Activated CD4-positive, alpha-beta T cell treated with anti-CD3 and anti-CD28 coated beads for 36 hours (primary cell): ENCODE measurements at regions of chr3 and their contacts with region 1.

Region 1: DNA sequence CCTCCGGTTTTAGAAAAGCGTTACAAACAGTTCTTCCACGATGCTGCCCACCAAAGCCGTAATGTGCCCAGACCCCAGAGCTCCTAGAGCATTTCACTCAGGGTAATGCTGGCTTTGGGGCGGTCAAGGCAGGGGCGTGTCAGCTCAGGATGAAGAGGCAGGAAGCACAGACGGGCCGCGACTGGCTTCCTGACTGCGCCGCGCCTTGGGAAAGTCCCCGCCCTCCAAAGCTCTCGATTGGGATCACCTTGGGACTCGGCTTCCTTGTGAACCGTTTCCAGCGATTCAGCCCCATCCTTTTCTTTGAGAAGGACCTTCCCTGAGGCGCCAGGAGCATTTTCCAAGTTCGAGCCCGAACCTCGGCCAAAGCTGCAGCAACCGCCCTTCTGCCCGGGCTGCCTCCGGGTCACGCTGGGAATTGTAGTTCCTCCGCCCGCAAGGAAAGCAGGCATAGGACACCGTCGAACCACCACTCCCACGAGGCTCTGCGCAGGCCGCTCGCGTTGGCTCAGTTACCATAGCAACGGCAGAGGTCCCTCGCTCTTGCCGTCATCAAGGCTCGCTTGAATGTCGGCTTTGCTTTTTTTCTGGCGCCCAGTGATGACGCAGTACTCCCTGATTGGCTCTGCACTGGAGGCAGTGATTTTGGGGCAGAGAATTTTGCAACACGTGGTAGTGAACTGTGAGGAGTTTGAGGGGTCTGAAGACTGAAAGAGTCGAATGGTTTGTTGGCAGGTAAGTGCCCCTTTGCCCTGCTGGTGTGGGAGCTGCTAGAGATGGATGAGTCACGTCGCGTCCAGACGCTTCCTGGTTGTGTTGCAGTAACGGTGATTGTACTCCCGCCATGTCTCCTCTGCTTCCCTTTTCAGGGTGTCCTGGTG is at the starts of genes CCDC191 and QTRT2:
- DNase-seq: peak; percentile 99
- ATAC-seq: peak; percentile 97
- H3K4me3 Mint-ChIP-seq: peak within 1 kb of the TSS; percentile 91
- H3K27ac Mint-ChIP-seq: peak within 1 kb of the TSS; percentile 95
- H3K4me1 Mint-ChIP-seq: peaks cover 43% of the 10 kb centered on the region
- H3K27me3 Mint-ChIP-seq: no peaks in the 10 kb centered on the region
- total RNA-seq, gene CCDC191: 2.2 to 2.4 TPM
- total RNA-seq, gene QTRT2: 31.3 to 47.0 TPM

Region 2: GRCh38 chr3:113514265-113514769 is 542.1 kb before region 1 on chr3:
- CTCF ChIA-PET with region 1: no interaction called
- POLR2A ChIA-PET with region 1: no interaction called
- intact Hi-C with region 1: loop called (anchors 1 to 2 kb)
- DNase-seq: no peak
- ATAC-seq: peak; percentile 30
- H3K4me3 Mint-ChIP-seq: no peak overlapping the region
- H3K27ac Mint-ChIP-seq: no peak overlapping the region
- H3K4me1 Mint-ChIP-seq: peaks cover 10% of the 10 kb centered on the region
- H3K27me3 Mint-ChIP-seq: peaks cover 6% of the 10 kb centered on the region

Region 3: GRCh38 chr3:113736548-113737089 is 319.8 kb before region 1 on chr3:
- CTCF ChIA-PET with region 1: interaction called, 4 read pairs
- POLR2A ChIA-PET with region 1: no interaction called
- intact Hi-C with region 1: loop called in 1 of 2 experiments (anchors 1 kb)
- DNase-seq: peak; percentile 25
- ATAC-seq: peak; percentile 86
- H3K4me3 Mint-ChIP-seq: no peak overlapping the region
- H3K27ac Mint-ChIP-seq: peak overlapping the region; percentile 74
- H3K4me1 Mint-ChIP-seq: peaks cover 67% of the 10 kb centered on the region
- H3K27me3 Mint-ChIP-seq: no peaks in the 10 kb centered on the region

Region 4: GRCh38 chr3:113844622-113845222 is 211.6 kb before region 1 on chr3:
- CTCF ChIA-PET with region 1: interaction called, 3 read pairs
- POLR2A ChIA-PET with region 1: no interaction called
- intact Hi-C with region 1: loop called (anchors 1 to 5 kb)
- DNase-seq: no peak
- ATAC-seq: no peak
- H3K4me3 Mint-ChIP-seq: no peak overlapping the region
- H3K27ac Mint-ChIP-seq: no peak overlapping the region
- H3K4me1 Mint-ChIP-seq: no peaks in the 10 kb centered on the region
- H3K27me3 Mint-ChIP-seq: no peaks in the 10 kb centered on the region

Region 5: GRCh38 chr3:113947372-113948014 is 108.9 kb before region 1 on chr3 and contains the start of gene ZDHHC23:
- CTCF ChIA-PET with region 1: no interaction called
- POLR2A ChIA-PET with region 1: no interaction called
- intact Hi-C with region 1: loop called (anchors 1 to 2 kb)
- DNase-seq: peak; percentile 74
- ATAC-seq: peak; percentile 75
- H3K4me3 Mint-ChIP-seq: peak within 1 kb of the TSS; percentile 76
- H3K27ac Mint-ChIP-seq: peak within 1 kb of the TSS; percentile 79
- H3K4me1 Mint-ChIP-seq: peaks cover 11% of the 10 kb centered on the region
- H3K27me3 Mint-ChIP-seq: peaks cover 25% of the 10 kb centered on the region
- total RNA-seq, gene ZDHHC23: 4.5 to 5.1 TPM

Region 6: DNA sequence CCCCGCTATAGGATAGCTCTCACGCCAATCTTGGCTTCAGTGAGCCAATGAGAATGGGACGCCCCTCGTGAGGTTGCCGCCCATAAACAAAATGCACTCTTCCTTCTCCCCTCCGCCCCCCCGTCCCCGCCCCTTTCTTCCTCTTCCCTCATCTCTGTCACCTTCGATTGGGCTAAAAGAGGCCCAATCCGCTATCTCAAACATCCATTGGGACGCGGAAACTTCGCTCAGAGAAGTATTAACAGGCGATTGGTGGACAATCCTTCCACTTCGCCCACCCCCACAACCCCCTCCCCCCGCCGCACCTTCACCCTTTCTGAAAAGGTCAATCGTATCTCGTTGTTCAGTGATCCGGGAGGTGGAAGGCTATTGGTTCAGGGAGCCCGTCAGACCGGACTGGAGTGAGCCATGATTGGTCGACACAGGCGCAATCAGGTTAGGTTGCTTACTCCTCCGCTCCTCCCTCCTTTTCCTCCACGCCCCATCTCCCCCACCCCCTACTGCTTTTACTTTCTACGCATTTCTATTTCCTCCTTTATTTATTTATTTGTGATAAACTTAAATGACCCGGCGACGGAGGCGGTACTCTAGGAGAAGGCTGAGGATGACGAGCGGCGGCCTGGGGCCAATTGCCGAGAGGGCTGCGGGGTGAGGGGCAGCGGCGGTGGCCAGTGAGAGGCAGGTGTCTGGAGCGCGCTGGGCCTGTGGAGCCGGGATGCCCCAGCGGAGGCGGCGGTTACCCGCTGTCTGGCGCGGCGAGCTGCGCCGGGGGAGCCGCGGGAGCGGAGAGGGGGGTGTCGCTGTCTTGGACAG is 1091.2 kb after region 1 on chr3:
- CTCF ChIA-PET with region 1: no interaction called
- POLR2A ChIA-PET with region 1: no interaction called
- intact Hi-C with region 1: loop called in 1 of 2 experiments (anchors 2 kb)
- DNase-seq: peak; percentile 97
- ATAC-seq: peak; percentile 85
- H3K4me3 Mint-ChIP-seq: peak overlapping the region; percentile 97
- H3K27ac Mint-ChIP-seq: peak overlapping the region; percentile 98
- H3K4me1 Mint-ChIP-seq: peaks cover 21% of the 10 kb centered on the region
- H3K27me3 Mint-ChIP-seq: no peaks in the 10 kb centered on the region